ENCODE measurements at regions of chr11 and their contacts with region 1.

Region 1: DNA sequence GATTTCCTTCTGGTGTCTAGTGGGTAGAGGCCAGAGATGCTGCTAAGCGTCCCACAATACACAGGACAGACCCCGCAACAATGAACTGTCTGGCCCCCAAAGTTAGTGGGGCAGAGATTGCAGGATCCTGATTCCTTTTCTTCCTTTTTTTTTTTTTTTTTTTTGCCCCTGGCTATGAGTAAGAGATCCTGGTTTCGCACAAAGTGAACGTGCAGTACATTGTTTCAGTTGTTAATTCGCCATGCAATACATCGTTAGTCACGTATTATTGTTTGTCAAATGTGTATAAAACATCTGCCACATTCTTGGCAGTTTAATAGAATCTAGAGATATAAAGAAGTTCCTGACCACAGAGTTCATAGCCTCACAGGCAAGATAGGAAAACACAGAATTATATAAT is 20.2 kb downstream of the ST3GAL4 start:
- DNase-seq: peak; percentile 71
- ATAC-seq: peak; percentile 7
- H3K4me3 ChIP-seq: no peak overlapping the region
- H3K27ac ChIP-seq: no peak overlapping the region
- H3K4me1 ChIP-seq: peaks cover 33% of the 10 kb centered on the region
- H3K27me3 ChIP-seq: no peaks in the 10 kb centered on the region
- CTCF ChIP-seq: no peak

Region 2: GRCh38 chr11:126431401-126432064 is 55.8 kb after region 1 on chr11:
- CTCF ChIA-PET with region 1: no interaction called
- POLR2A ChIA-PET with region 1: no interaction called
- intact Hi-C with region 1: loop called (anchors 2 kb)
- DNase-seq: peak; percentile 98
- ATAC-seq: peak; percentile 86
- H3K4me3 ChIP-seq: no peak overlapping the region
- H3K27ac ChIP-seq: peak overlapping the region; percentile 93
- H3K4me1 ChIP-seq: peaks cover 25% of the 10 kb centered on the region
- H3K27me3 ChIP-seq: no peaks in the 10 kb centered on the region
- CTCF ChIP-seq: no peak

Region 3: DNA sequence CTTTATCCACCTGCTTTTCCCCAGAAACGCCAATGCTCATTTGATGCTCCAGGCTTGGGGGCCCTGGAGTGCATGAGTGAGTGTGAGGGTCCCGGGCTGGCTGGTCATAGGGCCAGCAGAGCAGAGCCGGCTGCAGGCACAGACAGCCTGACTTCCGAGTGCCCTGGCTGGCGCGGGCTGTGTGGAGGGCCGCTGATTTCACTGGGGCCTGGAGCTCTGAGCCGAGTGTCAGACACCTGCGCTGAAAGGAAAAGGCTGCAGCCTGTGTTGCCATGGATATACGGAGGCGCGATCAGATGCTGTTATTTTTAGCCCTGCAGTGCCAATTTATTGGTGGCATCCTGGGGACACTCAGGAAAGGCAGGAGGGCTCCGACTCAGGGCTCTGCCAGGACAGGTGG is 67.4 kb after region 1 on chr11:
- CTCF ChIA-PET with region 1: no interaction called
- POLR2A ChIA-PET with region 1: no interaction called
- intact Hi-C with region 1: no loop called
- DNase-seq: no peak
- ATAC-seq: no peak
- H3K4me3 ChIP-seq: no peak overlapping the region
- H3K27ac ChIP-seq: no peak overlapping the region
- H3K4me1 ChIP-seq: peaks cover 5% of the 10 kb centered on the region; the same call in 1 of the 2 replicates
- H3K27me3 ChIP-seq: no peaks in the 10 kb centered on the region
- CTCF ChIP-seq: no peak

Region 4: GRCh38 chr11:126523441-126524205 is 147.9 kb after region 1 on chr11:
- CTCF ChIA-PET with region 1: no interaction called
- POLR2A ChIA-PET with region 1: no interaction called
- intact Hi-C with region 1: no loop called
- DNase-seq: no peak
- ATAC-seq: no peak
- H3K4me3 ChIP-seq: no peak overlapping the region
- H3K27ac ChIP-seq: no peak overlapping the region
- H3K4me1 ChIP-seq: no peaks in the 10 kb centered on the region
- H3K27me3 ChIP-seq: peaks cover 90% of the 10 kb centered on the region
- CTCF ChIP-seq: no peak

Measured in PC-3 (cell line).